Caco-2 (cell line): ENCODE measurements at regions of chr3 and their contacts with region 1.

Region 1: GRCh38 chr3:133805527-133806475 is at the start of gene SRPRB:
- DNase-seq: peak; percentile 95
- H3K4me3 ChIP-seq: peak within 1 kb of the TSS; percentile 60
- H3K4me3 Mint-ChIP-seq: peak within 1 kb of the TSS; percentile 93
- H3K27ac Mint-ChIP-seq: peak within 1 kb of the TSS; percentile 93
- H3K4me1 ChIP-seq: no peaks in the 10 kb centered on the region
- H3K4me1 Mint-ChIP-seq: peaks cover 8% of the 10 kb centered on the region
- H3K27me3 ChIP-seq: no peaks in the 10 kb centered on the region
- H3K27me3 Mint-ChIP-seq: no peaks in the 10 kb centered on the region
- CTCF ChIP-seq: no peak
- total RNA-seq, gene SRPRB: 83.0 and 87.3 TPM in 2 replicates

Region 2: DNA sequence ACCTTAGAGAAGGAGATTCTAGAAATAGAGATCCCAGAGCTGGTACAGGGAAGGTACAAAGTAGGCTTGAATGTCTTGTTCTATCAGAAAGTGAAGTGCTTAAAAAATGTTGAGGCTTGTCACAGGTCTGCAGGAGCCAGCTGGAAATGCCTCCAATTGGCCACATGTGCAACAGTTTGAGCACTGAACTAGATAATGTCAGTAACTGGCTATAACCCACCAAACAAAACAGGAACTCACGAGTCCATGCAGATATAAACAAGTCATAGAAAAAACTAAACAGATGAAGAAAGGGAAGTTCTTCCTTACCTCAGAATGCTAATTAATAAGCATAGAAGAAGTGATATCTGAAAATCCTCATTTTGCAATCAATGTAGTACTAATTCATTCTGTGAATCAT is 71.5 kb before region 1 on chr3:
- CTCF ChIA-PET with region 1: no interaction called
- POLR2A ChIA-PET with region 1: no interaction called
- intact Hi-C with region 1: loop called (anchors 5 kb)
- DNase-seq: no peak
- H3K4me3 ChIP-seq: no peak overlapping the region
- H3K4me3 Mint-ChIP-seq: no peak overlapping the region
- H3K27ac Mint-ChIP-seq: no peak overlapping the region
- H3K4me1 ChIP-seq: peaks cover 26% of the 10 kb centered on the region; the same call in 1 of the 2 replicates
- H3K4me1 Mint-ChIP-seq: peaks cover 5% of the 10 kb centered on the region
- H3K27me3 ChIP-seq: no peaks in the 10 kb centered on the region
- H3K27me3 Mint-ChIP-seq: no peaks in the 10 kb centered on the region
- CTCF ChIP-seq: no peak

Region 3: DNA sequence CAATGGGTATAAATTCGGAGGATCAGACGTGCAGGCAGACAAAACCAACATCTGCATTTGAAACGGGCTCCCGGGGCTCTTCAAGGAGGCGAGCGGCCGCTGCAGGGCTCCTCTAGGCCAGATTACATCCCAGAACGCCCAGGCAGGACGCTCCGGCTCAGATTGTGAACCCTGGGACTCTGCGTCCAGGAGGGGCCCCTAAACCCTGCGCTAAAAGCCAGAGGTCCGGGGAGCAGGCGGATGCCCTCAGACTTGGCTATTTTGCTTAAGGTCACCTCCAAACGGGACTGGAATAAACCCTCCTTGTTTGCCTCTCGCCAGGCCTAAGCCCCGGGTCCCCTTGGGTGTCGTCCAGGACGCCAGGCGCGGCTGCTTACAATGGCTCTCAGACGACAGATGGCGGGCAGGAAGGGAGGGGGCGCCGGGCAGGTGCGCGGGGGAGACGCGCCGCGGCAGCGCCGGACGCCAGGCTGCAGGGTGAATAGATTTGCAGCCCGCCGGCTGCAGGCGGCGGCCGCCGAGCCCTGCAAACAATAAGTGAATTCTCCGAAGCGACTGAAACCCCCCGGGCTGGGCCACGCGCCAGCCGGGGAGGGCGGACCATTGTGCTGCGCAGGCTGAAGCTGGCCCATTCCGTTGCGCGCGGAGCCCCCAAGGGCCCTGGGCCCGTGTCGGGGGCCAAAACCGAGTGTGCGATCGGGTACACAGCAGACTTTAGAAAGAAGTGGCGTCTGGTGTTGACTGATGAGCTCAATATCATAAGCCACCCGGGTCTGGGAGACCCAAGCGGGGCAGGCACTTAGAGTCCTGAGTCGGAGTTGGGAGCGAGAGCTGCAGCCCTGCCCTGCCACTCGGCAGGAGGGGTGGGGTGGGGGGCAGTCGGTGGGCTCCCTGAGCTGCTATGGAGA is 600.8 kb after region 1 on chr3:
- CTCF ChIA-PET with region 1: no interaction called
- POLR2A ChIA-PET with region 1: no interaction called
- intact Hi-C with region 1: no loop called
- DNase-seq: no peak
- H3K4me3 ChIP-seq: peak overlapping the region; percentile 17; the same call in 1 of the 2 replicates
- H3K4me3 Mint-ChIP-seq: peak overlapping the region; percentile 42
- H3K27ac Mint-ChIP-seq: no peak overlapping the region
- H3K4me1 ChIP-seq: no peaks in the 10 kb centered on the region
- H3K4me1 Mint-ChIP-seq: no peaks in the 10 kb centered on the region
- H3K27me3 ChIP-seq: no peaks in the 10 kb centered on the region
- H3K27me3 Mint-ChIP-seq: no peaks in the 10 kb centered on the region
- CTCF ChIP-seq: no peak

Region 4: DNA sequence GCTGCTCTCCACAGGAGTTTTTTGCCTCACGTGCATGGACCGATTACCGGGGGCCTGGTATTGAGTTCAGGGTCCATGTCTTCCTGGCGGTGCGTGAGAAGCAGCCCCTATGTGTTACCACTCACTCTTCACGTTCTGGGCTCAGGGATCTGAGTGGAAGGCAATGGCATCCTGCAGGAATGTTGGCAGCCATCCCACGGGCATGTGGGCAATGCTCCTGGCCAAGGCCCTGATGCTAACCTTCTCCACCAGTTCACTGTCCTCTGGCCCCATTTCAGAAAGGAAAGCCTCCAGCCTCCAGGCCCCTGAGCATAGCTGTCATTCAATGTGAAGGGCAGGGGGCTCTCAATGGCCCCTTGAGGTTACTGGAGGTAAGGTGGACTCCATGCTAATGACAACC is 888.0 kb after region 1 on chr3:
- CTCF ChIA-PET with region 1: no interaction called
- POLR2A ChIA-PET with region 1: no interaction called
- intact Hi-C with region 1: no loop called
- DNase-seq: no peak
- H3K4me3 ChIP-seq: no peak overlapping the region
- H3K4me3 Mint-ChIP-seq: no peak overlapping the region
- H3K27ac Mint-ChIP-seq: no peak overlapping the region
- H3K4me1 ChIP-seq: no peaks in the 10 kb centered on the region
- H3K4me1 Mint-ChIP-seq: no peaks in the 10 kb centered on the region
- H3K27me3 ChIP-seq: no peaks in the 10 kb centered on the region
- H3K27me3 Mint-ChIP-seq: peaks cover 6% of the 10 kb centered on the region
- CTCF ChIP-seq: no peak